Activated CD4-positive, alpha-beta memory T cell treated with anti-CD3 and anti-CD28 coated beads for 36 hours (primary cell): ENCODE measurements at regions of chr2 and their contacts with region 1.

Region 1: DNA sequence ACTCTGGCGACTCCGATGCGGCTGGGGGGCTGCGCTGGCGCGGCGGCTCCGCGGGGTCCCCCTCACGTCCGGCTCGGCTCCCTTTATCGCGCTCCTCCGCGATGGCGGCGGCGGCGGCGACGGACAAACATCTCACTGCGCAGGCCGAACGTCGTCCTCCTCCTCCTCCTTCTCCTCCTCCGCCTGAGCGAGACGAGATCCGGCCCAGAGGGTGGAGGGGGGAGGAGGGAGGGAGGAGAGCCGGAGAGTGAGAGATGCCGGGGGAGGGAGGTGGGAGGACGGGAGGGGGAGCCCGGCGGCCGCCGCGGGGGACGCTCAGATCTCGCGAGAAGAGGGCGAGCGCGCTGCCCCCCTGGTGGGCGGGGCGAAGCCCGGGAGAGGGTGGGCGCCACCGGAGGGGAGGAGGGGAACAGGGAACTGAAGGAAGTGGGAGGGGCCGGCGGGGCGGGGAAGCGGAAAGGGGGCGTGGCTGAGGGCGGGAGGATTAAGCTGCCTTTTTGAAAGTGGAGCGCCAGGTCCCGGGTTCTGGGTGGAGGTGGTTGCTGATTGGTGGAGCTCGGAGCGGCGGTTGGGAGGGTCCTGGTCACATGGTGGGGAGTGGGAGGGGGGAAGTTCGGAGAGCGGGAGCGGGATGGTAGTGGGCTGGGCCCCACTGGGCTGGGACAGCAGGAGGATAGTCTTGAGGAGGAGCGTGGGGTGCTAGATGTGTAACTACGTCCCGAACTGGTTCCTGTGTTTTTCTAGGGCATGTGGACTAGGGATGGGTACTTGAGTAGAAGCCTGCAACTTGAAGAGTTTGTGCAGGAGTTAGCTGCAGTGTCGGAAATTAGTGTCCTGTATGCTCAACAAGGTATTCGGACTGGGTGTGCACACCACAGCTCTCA is at the start of gene CUL3:
- DNase-seq: peak; percentile 100
- H3K4me3 Mint-ChIP-seq: peak within 1 kb of the TSS; percentile 97
- H3K27ac Mint-ChIP-seq: peak within 1 kb of the TSS; percentile 92
- H3K4me1 Mint-ChIP-seq: peaks cover 31% of the 10 kb centered on the region
- H3K27me3 Mint-ChIP-seq: no peaks in the 10 kb centered on the region
- total RNA-seq, gene CUL3: 75.8 to 79.5 TPM

Region 2: DNA sequence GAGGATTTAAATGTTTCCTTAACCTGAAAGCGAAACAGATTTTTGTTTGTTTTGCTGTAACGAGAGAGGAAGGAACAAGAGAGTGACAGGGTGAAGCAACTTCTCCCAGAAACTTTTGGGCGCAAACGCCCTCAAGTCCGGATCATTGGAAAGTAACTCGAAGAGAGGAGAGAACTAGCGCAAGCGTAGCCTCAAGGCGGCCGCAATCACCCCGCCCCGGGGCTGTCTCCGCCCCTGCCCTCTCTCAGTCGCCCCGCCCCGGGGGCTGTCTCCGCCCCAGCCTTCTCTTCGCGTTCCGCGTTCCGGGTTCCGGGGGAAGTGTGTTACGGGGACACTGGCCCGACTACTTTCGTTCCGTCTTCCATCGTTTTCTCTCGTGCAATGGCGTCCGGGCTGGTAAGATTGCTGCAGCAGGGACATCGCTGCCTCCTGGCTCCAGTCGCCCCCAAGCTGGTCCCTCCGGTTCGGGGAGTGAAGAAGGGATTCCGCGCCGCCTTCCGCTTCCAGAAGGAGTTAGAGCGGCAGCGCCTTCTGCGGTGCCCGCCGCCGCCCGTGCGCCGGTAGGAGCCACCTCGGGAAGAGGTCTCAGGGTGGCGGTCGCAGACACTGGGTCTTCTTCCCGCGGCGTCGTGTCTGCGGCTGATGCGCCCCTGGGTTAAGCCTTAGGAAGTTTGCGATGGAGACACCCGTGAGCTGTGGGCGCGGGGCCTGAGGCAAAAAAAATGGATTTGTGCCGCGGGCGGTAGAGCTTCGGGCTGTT is 628.2 kb before region 1 on chr2 and contains the start of gene MRPL44:
- CTCF ChIA-PET with region 1: no interaction called
- POLR2A ChIA-PET with region 1: no interaction called
- intact Hi-C with region 1: loop called (anchors 1 kb)
- DNase-seq: peak; percentile 98
- H3K4me3 Mint-ChIP-seq: peak within 1 kb of the TSS; percentile 92
- H3K27ac Mint-ChIP-seq: peak within 1 kb of the TSS; percentile 88
- H3K4me1 Mint-ChIP-seq: peaks cover 65% of the 10 kb centered on the region
- H3K27me3 Mint-ChIP-seq: no peaks in the 10 kb centered on the region
- total RNA-seq, gene MRPL44: 39.4 to 41.6 TPM

Region 3: DNA sequence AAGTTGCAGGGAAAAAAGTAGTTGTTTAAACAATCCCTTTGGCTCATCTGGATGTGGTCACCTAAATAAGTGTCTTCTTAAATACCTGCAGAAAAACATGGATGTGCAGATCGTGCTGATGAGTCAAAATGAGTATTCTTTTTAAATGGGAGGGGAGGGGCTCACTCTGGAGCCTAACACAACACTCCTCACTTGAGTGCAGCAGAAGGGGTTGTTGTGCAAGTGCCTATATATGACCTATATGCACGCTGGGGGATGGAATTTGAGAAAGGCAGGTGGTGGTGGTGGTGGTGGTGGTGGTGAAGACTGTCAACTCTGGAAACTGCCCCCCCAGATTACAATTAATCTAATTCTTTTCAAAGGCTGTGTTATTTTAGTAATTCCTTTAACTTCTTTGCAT is 105.6 kb before region 1 on chr2:
- CTCF ChIA-PET with region 1: no interaction called
- POLR2A ChIA-PET with region 1: no interaction called
- intact Hi-C with region 1: loop called (anchors 5 kb)
- DNase-seq: no peak
- H3K4me3 Mint-ChIP-seq: no peak overlapping the region
- H3K27ac Mint-ChIP-seq: no peak overlapping the region
- H3K4me1 Mint-ChIP-seq: peaks cover 2% of the 10 kb centered on the region
- H3K27me3 Mint-ChIP-seq: no peaks in the 10 kb centered on the region

Region 4: GRCh38 chr2:224561234-224562005 is 24.0 kb before region 1 on chr2:
- CTCF ChIA-PET with region 1: interaction called, 5 read pairs
- POLR2A ChIA-PET with region 1: interaction called, 25 read pairs
- intact Hi-C with region 1: no loop called
- DNase-seq: no peak
- H3K4me3 Mint-ChIP-seq: peak overlapping the region; percentile 17
- H3K27ac Mint-ChIP-seq: no peak overlapping the region
- H3K4me1 Mint-ChIP-seq: peaks cover 50% of the 10 kb centered on the region
- H3K27me3 Mint-ChIP-seq: no peaks in the 10 kb centered on the region

Region 5: GRCh38 chr2:224601923-224602322 is 16.5 kb after region 1 on chr2:
- CTCF ChIA-PET with region 1: no interaction called
- POLR2A ChIA-PET with region 1: interaction called, 4 read pairs
- intact Hi-C with region 1: loop called (anchors 1 kb)
- DNase-seq: no peak
- H3K4me3 Mint-ChIP-seq: no peak overlapping the region
- H3K27ac Mint-ChIP-seq: no peak overlapping the region
- H3K4me1 Mint-ChIP-seq: peaks cover 15% of the 10 kb centered on the region
- H3K27me3 Mint-ChIP-seq: peaks cover 11% of the 10 kb centered on the region

Region 6: GRCh38 chr2:224946895-224947294 is 361.4 kb after region 1 on chr2:
- CTCF ChIA-PET with region 1: no interaction called
- POLR2A ChIA-PET with region 1: no interaction called
- intact Hi-C with region 1: loop called (anchors 5 kb)
- DNase-seq: no peak
- H3K4me3 Mint-ChIP-seq: peak overlapping the region; percentile 90
- H3K27ac Mint-ChIP-seq: peak overlapping the region; percentile 95
- H3K4me1 Mint-ChIP-seq: peaks cover 65% of the 10 kb centered on the region
- H3K27me3 Mint-ChIP-seq: no peaks in the 10 kb centered on the region